ENCODE measurements at regions of chr9 and their contacts with region 1.

Region 1: DNA sequence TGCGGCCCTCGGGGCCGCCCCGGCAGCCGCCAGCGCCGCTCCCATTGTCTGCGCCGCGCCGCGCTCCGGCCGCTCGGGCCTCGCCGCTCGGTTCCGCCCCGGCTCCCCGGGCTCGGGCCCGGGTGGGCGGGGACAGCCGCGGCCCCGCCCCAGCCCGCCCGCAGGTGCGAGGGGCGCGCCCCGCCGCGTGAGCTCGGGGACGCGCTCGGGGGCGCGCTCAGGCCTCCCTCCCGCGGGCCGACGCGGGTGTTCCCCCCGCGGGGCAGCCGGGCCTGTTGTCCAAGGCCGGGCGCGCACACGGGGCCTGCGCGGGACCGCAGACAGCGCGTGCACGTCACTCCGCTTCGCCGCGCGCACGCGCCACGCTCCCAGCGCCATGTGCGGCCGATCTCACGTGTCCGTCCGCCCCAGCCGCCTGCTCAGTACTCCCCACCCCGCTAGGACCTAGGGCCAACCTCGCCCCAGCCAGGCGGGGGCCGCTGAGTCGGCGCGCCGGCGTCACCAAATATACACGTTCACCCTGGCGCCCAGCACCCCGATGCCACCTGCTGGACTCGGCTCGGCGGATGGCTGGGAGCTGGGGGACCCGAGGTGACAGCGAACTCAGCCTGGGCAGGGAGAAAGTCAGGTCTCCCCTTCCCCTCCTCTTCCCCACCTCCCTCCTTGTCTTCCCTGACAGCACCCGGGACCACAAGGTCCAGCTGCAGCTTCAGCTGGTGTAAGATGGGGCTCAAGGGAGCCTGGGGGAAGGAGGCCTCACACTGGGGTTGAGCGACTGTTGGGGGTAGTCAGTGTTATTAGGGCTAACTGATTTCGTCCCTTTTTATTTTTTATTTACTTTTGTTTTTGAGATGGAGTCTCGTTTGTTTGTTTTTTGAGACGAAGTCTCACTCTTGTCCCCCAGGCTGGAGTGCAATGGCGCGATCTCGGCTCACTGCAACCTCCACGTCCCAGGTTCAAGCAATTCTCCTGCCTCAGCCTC is 14.3 kb downstream of the GBGT1 start:
- DNase-seq: peak; percentile 72 to 91 (median 86)
- H3K4me3 ChIP-seq: peak overlapping the region; percentile 24 to 86 (median 69)
- H3K27ac ChIP-seq: peak overlapping the region; percentile 76 to 100 (median 92)
- H3K27me3 ChIP-seq: no peaks in the 10 kb centered on the region
- CTCF ChIP-seq: peak in 51 of 56 donors; percentile 17 to 69 (median 48)

Region 2: GRCh38 chr9:133030317-133031129 is 118.9 kb before region 1 on chr9 and contains the start of gene GTF3C5:
- intact Hi-C with region 1: loop called (anchors 5 kb)
- DNase-seq: peak; percentile 85 to 95 (median 94)
- H3K4me3 ChIP-seq: peak within 1 kb of the TSS; percentile 69 to 100 (median 93)
- H3K27ac ChIP-seq: peak within 1 kb of the TSS; percentile 53 to 98 (median 92)
- H3K27me3 ChIP-seq: no peaks in the 10 kb centered on the region
- CTCF ChIP-seq: peak in 36 of 56 donors; percentile 3 to 61 (median 24)
- total RNA-seq, gene GTF3C5: 37.5 to 98.9 (median 61.0) TPM

Region 3: GRCh38 chr9:133048569-133048968 is 100.8 kb before region 1 on chr9:
- intact Hi-C with region 1: loop called (anchors 2 to 5 kb)
- DNase-seq: peak in 6 of 10 donors; percentile 36 to 66 (median 57)
- H3K4me3 ChIP-seq: no peak overlapping the region
- H3K27ac ChIP-seq: peak overlapping the region in 53 of 59 donors; percentile 9 to 98 (median 90)
- H3K27me3 ChIP-seq: no peaks in the 10 kb centered on the region
- CTCF ChIP-seq: peak in 54 of 56 donors; percentile 18 to 76 (median 56)

Region 4: DNA sequence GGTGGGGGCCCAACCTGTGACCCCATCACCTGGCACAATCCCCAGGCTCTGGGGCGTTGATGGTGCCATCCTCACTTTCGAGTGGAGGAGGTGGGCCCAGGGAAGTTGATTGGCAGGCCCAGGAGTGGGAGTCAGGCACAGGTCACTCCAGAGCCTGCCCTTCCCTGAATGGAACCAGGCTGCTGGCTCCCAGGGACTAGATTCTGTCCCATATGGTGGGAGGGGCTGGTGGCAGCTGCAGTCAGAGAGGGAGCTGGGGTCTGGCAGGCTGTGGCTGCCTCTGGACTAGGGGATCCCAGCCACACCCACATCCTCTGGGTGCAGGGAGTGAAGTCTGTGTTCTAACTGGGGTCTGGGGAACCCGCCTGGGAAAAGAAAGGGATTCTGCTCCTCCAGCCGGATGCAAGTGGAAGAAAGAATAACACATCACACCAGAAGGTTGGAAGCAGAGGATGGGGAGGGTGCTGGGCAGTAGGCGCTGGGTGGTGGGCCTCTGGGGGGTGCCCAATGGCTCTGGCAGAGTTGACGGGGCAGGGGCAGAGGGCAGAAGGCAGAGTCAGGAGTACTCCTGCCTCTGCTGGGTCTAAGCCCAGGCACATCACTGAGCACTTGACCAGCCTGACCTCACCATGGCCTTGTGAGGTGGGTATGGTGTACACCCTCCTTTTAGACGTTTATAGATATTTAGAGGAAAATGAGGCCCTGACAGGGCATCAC is 61.8 kb before region 1 on chr9:
- intact Hi-C with region 1: no loop called
- DNase-seq: peak in 1 of 10 donors; percentile 37
- H3K4me3 ChIP-seq: no peak overlapping the region
- H3K27ac ChIP-seq: peak overlapping the region in 1 of 59 donors; percentile 79
- H3K27me3 ChIP-seq: no peaks in the 10 kb centered on the region
- CTCF ChIP-seq: no peak